ENCODE measurements at regions of chr2 and their contacts with region 1.

Region 1: DNA sequence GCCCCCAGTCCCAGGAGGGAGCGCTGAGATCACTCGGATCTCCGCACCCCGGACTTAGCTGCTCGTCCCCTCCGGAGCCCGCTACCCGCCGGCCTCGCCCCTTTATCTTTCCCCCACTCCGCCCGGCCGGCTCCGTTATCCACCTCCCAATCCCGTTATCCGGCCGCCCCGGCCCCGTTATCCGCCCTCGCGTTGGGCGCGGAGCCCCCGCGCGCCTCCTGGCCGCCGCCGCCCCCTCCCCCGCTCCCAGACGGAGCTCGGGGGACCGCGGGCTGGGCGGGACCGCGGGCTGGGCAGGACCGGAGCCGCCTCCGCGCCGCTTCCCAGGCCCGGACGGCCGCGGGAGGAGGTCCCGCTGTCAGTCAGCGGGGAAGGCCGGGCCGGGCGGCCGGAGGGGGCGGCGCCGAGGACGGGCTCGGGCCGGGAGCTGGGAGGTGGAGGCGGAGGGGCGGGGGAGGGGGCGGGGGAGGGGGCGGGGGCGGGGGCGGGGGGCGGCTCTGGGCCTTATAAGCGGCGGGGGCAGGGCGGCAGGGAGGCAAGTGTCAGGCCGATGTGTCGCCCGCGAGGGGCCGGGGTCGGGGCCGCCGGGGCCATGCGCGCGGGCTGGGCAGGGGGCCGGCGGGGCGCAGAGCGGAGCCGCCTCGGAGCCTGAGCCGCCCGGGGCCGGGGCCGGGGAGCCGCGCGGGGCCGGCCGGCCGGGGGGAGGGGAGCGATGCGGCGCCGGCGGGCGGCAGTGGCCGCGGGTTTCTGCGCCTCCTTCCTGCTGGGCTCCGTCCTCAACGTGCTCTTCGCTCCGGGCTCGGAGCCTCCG is at the start of gene PKDCC:
- DNase-seq: peak; percentile 85
- H3K4me3 ChIP-seq: peak within 1 kb of the TSS; percentile 84
- H3K27ac ChIP-seq: peak within 1 kb of the TSS; percentile 95
- H3K4me1 ChIP-seq: peaks cover 34% of the 10 kb centered on the region
- H3K27me3 ChIP-seq: no peaks in the 10 kb centered on the region
- CTCF ChIP-seq: no peak
- total RNA-seq, gene PKDCC: 77.5 and 82.2 TPM in 2 replicates

Region 2: GRCh38 chr2:41940770-41941113 is 107.0 kb before region 1 on chr2:
- CTCF ChIA-PET with region 1: no interaction called
- POLR2A ChIA-PET with region 1: no interaction called
- intact Hi-C with region 1: loop called (anchors 5 kb)
- DNase-seq: peak; percentile 96
- H3K4me3 ChIP-seq: no peak overlapping the region
- H3K27ac ChIP-seq: peak overlapping the region; percentile 74
- H3K4me1 ChIP-seq: peaks cover 69% of the 10 kb centered on the region
- H3K27me3 ChIP-seq: no peaks in the 10 kb centered on the region
- CTCF ChIP-seq: no peak

Region 3: DNA sequence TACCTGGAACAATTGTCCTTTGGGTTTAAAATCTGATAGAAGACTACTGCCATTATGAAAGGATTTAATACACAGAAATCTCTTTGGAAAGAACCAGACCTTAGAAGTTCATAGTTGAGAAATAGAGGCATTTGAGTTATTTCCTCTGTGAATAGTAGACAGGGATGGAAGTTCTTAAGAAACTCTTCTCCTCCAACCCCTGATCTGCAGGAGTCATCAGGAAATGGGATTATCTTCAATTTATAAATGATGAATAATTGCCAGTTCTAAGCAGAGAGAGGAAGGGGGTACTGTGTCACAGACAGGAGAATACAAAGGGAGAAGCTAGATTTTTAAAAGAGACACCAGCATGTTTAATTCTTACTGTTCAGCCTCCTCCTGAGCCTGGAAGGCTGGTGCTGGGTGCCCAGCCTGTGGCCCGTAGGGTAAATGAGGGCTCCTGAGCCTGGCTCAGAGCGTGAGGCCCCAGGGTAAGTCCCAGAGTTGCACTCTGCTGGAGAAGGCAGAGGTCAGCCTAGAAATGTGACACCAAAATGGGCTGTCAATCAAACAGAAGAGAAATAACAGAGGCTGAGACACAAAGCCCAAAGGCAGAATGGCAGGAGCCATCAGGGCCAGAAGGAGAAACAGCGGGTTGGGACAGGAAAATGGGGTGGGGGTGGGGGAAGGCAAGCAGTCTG is 58.1 kb before region 1 on chr2:
- CTCF ChIA-PET with region 1: no interaction called
- POLR2A ChIA-PET with region 1: no interaction called
- intact Hi-C with region 1: loop called (anchors 2 kb)
- DNase-seq: peak; percentile 96
- H3K4me3 ChIP-seq: peak overlapping the region; percentile 4
- H3K27ac ChIP-seq: peak overlapping the region; percentile 88
- H3K4me1 ChIP-seq: peaks cover 68% of the 10 kb centered on the region
- H3K27me3 ChIP-seq: no peaks in the 10 kb centered on the region
- CTCF ChIP-seq: no peak

Region 4: DNA sequence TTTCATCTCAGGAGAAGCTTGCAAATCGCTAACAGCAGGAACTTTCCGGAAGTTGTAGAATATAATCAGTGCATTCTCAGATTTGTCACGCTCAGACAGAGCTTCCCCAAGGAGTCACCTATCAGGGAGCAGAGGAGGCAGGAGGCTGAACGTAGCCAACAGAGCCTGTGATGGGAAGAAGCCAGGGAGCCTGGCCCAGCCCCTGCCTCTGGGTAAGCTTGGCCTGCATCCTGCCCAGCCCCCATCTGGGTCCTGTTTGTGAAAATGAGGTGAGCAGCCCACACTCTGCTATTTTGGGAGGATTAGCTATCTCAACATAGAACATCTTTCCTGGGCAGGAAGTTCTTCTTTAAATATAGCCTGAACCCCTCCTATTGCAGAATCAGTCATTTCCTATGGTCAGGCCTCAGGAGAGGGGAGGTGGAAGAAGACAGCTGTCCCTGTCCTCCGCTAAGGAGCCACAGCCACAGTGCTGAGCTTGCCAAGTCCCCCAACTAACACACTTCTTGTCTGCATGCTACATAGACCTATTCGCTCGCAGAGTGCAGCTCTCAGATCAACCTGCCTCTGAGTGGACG is 19.0 kb before region 1 on chr2:
- CTCF ChIA-PET with region 1: no interaction called
- POLR2A ChIA-PET with region 1: no interaction called
- intact Hi-C with region 1: loop called (anchors 1 kb)
- DNase-seq: peak; percentile 96
- H3K4me3 ChIP-seq: no peak overlapping the region
- H3K27ac ChIP-seq: peak overlapping the region; percentile 78
- H3K4me1 ChIP-seq: peaks cover 68% of the 10 kb centered on the region
- H3K27me3 ChIP-seq: no peaks in the 10 kb centered on the region
- CTCF ChIP-seq: no peak